ENCODE measurements at regions of chr3 and their contacts with region 1.

Region 1: GRCh38 chr3:86969500-86970189 is 21.3 kb downstream of the VGLL3 start:
- DNase-seq: peak; percentile 19
- ATAC-seq: peak; percentile 74
- H3K4me3 ChIP-seq: no peak overlapping the region
- H3K27ac ChIP-seq: no peak overlapping the region
- H3K4me1 ChIP-seq: no peaks in the 10 kb centered on the region
- H3K27me3 ChIP-seq: no peaks in the 10 kb centered on the region
- CTCF ChIP-seq: peak; percentile 68
- EP300 ChIP-seq: no peak
- POLR2A ChIP-seq: no peak
- RAD21 ChIP-seq: no peak

Region 2: GRCh38 chr3:86774082-86774691 is 195.5 kb before region 1 on chr3:
- CTCF ChIA-PET with region 1: no interaction called
- POLR2A ChIA-PET with region 1: no interaction called
- in situ Hi-C with region 1: no loop called
- intact Hi-C with region 1: loop called (anchors 5 kb)
- DNase-seq: peak; percentile 9
- ATAC-seq: no peak
- H3K4me3 ChIP-seq: no peak overlapping the region
- H3K27ac ChIP-seq: no peak overlapping the region
- H3K4me1 ChIP-seq: no peaks in the 10 kb centered on the region
- H3K27me3 ChIP-seq: no peaks in the 10 kb centered on the region
- CTCF ChIP-seq: peak; percentile 41
- EP300 ChIP-seq: no peak
- POLR2A ChIP-seq: no peak
- RAD21 ChIP-seq: no peak

Region 3: DNA sequence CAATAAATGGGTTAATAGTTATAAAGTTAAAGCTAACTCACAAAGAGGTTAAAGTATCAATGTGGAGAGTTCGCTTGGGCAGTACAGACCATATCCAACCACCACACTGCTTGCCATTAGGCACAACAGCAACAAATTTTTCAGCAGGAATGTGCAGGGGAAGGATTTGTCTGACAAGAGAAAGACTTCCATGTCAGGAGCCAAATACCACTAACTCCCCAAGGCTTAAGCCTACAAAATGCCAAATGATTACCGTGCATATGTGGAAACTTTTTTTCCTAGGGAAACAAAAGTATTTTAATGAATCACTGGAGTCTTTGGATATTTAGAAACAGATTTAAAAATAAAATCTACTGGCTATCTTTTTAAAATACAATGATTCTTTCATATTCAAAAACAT is 13.2 kb after region 1 on chr3:
- CTCF ChIA-PET with region 1: no interaction called
- POLR2A ChIA-PET with region 1: no interaction called
- in situ Hi-C with region 1: no loop called
- intact Hi-C with region 1: no loop called
- DNase-seq: no peak
- ATAC-seq: no peak
- H3K4me3 ChIP-seq: no peak overlapping the region
- H3K27ac ChIP-seq: no peak overlapping the region
- H3K4me1 ChIP-seq: no peaks in the 10 kb centered on the region
- H3K27me3 ChIP-seq: peaks cover 0 to 1% of the 10 kb centered on the region in 2 experiments; a peak in 1 of 5 replicates
- CTCF ChIP-seq: no peak
- EP300 ChIP-seq: no peak
- POLR2A ChIP-seq: no peak
- RAD21 ChIP-seq: no peak

Region 4: GRCh38 chr3:87082796-87083440 is 113.3 kb after region 1 on chr3:
- CTCF ChIA-PET with region 1: interaction called, 10 read pairs
- POLR2A ChIA-PET with region 1: no interaction called
- in situ Hi-C with region 1: no loop called
- intact Hi-C with region 1: loop called (anchors 1 kb)
- DNase-seq: peak; percentile 34
- ATAC-seq: peak; percentile 90
- H3K4me3 ChIP-seq: no peak overlapping the region
- H3K27ac ChIP-seq: no peak overlapping the region
- H3K4me1 ChIP-seq: no peaks in the 10 kb centered on the region
- H3K27me3 ChIP-seq: no peaks in the 10 kb centered on the region
- CTCF ChIP-seq: peak; percentile 70
- EP300 ChIP-seq: no peak
- POLR2A ChIP-seq: no peak
- RAD21 ChIP-seq: 0 out of 2 replicates have a peak, but pooled peaks have one; percentile 12

Region 5: DNA sequence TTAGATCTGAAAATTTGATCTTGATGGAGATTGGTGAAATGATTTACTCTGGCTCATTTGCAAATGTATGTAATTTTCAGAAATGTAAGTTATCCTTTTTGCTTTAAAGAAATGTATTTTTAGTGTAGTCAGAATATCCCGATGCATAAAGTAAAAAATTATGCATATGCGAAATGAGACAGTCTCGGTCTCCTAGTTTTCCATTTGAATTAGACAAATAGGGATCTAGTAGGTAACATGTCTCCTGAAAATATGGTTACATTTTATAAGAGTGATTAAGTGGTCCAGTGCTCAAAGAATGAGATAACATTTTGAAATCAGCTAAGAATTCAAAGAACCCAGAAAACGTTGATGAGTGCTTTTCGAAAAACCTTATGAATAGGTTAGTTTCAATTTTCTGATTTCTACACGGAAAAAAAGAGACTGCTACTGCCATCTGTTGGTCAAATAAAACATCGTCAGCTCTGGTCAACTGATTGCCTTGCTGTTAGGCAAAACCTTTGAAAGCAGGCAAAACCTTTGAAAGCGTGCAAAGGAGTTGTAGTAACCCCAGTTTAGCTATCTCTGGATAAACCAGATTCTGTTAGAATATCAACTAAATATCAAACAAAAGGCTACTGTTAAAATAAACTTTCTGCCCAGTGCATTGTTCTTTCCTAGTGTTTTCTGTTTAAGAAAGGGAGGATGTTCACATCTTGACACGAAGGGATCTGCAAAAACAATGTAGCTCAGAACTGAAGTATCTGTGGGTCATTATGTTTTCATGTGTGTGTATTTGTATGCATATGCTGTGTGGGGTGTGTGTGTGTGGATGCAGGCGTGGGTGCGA is 198.2 kb after region 1 on chr3:
- CTCF ChIA-PET with region 1: interaction called, 11 read pairs
- POLR2A ChIA-PET with region 1: no interaction called
- in situ Hi-C with region 1: loop called (anchors 10 kb)
- intact Hi-C with region 1: no loop called
- DNase-seq: peak; percentile 31
- ATAC-seq: peak; percentile 61
- H3K4me3 ChIP-seq: peak overlapping the region in 1 of 3 experiments; percentile 17; a peak in 3 of 6 replicates
- H3K27ac ChIP-seq: no peak overlapping the region
- H3K4me1 ChIP-seq: peaks cover 4% of the 10 kb centered on the region; the same call in 1 of the 2 replicates
- H3K27me3 ChIP-seq: no peaks in the 10 kb centered on the region
- CTCF ChIP-seq: peak; percentile 68
- EP300 ChIP-seq: no peak
- POLR2A ChIP-seq: no peak
- RAD21 ChIP-seq: no peak

Region 6: DNA sequence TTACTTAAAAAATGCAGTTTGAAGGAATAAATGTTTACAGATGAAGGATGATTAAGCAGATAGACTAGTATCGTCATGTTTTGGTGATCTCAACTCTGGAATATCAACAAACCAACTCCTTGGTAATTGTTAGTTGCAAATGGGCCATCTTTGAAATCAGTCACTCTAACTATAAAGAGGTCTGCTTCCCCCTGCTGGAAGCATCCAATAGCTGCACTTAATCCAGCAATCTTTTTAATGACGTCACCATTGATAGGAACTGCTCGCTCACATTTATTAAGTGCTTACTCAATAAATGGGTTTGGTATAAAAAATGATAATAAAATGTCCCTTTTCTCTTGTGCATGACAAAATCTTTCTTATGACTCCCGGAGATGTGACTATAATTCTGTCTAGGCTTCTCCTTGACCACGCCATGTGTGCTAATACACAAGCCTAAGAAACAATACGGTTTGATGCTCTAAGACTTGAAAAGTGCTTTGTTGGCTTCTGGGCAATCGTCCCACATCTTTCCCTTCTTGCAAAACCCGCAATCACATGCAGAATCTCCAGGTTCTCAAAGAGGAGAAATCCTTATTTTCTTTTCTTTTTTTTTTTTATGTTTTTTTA is 534.4 kb after region 1 on chr3:
- CTCF ChIA-PET with region 1: no interaction called
- POLR2A ChIA-PET with region 1: no interaction called
- in situ Hi-C with region 1: no loop called
- intact Hi-C with region 1: loop called (anchors 5 kb)
- DNase-seq: peak; percentile 60
- ATAC-seq: peak; percentile 52; the same call in 1 of the 3 replicates
- H3K4me3 ChIP-seq: no peak overlapping the region
- H3K27ac ChIP-seq: no peak overlapping the region
- H3K4me1 ChIP-seq: no peaks in the 10 kb centered on the region
- H3K27me3 ChIP-seq: no peaks in the 10 kb centered on the region
- CTCF ChIP-seq: peak; percentile 62
- EP300 ChIP-seq: no peak
- POLR2A ChIP-seq: no peak
- RAD21 ChIP-seq: peak; percentile 25; the same call in 1 of the 2 replicates

Region 7: DNA sequence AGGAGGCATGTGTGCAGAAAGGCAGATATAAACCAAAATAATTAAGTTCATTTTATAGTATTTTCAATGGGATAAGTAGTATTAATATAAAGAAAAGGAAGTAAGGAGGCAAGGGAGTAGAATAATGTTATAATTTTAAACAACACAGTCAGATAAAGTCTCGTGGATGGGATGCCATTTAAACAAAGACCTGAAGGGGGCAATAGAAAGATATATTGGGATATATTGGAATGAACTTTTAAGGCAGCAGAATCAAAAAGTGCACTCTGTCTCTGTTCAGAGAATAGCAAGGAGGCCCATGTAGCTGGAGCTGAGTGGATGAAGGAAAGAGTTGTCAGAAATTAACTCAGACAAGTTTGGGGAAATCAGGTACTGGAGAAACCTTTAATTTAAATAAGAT is 930.4 kb after region 1 on chr3:
- CTCF ChIA-PET with region 1: no interaction called
- POLR2A ChIA-PET with region 1: no interaction called
- in situ Hi-C with region 1: no loop called
- intact Hi-C with region 1: no loop called
- DNase-seq: no peak
- ATAC-seq: no peak; the same call in 2 of the 3 replicates
- H3K4me3 ChIP-seq: no peak overlapping the region
- H3K27ac ChIP-seq: no peak overlapping the region
- H3K4me1 ChIP-seq: no peaks in the 10 kb centered on the region
- H3K27me3 ChIP-seq: no peaks in the 10 kb centered on the region
- CTCF ChIP-seq: no peak
- EP300 ChIP-seq: no peak
- POLR2A ChIP-seq: no peak
- RAD21 ChIP-seq: no peak

Measured in HepG2 (cell line).